ENCODE measurements at regions of chr6 and their contacts with region 1.

Region 1: DNA sequence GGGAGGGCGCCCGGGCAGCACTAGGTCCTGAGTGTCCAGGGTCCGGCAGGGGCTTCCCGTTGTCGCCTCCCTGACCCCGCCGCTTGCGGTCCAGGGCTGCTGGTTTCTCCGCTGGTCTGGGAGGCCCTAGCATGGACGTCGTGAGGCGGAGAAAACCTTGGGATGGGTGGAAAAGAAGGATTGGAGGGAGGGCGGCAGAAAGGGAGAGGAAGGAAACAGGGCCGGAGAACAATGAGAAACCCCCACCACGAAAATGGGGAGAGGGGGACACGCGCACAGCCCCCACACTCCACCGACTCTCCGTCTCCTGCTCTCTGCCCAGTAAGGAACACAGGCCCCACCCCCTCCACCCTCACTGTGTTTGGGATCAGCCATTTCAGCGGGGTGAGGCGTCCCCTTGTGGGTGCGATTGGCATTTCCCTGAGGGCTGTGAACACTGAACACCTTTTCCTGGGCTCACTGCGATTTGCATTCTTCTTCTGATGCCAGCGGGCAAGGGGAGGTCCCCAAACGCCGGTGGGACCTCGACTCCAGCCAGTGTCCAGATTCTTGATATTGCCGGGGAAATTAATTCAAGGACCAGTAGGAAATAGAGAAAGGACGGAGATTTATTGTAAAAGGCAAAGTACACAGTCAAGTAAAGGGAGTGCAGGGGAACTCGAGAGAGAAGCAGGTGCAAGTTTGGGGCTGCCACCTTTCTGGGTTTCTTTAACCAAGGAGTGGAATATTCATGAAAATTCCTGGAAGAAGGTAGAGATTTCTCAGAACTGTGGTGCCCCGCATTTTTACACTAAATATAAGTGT is 3.3 kb upstream of the RAET1G start:
- DNase-seq: peak; percentile 90
- H3K4me3 Mint-ChIP-seq: peak overlapping the region; percentile 12
- H3K27ac Mint-ChIP-seq: no peak overlapping the region
- H3K4me1 Mint-ChIP-seq: peaks cover 19% of the 10 kb centered on the region
- H3K27me3 Mint-ChIP-seq: peaks cover 32% of the 10 kb centered on the region
- CTCF ChIP-seq: peak; percentile 94

Region 2: DNA sequence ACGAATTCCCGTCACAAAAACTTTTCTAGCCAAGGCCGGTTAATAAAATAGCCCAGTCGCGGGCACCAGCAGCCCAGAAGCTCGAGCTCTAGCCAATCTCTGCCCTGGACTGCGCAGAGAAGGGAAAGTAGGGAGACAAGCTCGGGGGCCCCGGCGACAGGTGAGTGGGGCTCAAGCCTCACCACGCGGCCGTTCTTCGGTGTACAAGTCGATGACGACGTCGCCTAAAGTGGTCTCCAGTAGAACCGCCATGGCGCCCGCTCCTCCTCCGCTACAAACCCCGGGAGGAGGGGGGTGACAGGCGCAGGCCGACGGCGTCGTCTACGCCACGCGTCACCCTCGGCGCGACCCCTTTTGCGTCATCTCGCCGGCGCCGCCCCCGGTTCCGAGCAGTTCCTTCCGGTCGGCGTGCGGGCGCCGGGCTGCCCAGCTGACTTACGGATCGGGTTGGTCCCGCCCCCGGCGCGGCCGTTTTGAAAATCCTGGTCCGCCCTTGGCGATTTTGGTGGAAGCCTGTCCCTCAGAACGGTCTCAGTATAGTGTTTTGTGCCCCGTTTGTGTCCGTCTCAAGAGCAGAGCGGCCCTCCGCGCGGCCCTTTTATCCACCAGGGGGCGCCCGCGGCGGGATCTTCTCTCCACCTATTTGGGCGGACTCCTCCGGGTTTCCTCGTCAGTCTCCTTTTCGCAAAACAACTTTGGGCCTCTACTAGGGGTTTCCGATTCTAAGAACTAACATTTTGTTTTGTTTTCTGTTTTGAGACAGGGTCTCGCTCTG is 380.2 kb before region 1 on chr6 and contains the start of gene PPIL4:
- CTCF ChIA-PET with region 1: no interaction called
- POLR2A ChIA-PET with region 1: no interaction called
- intact Hi-C with region 1: loop called (anchors 10 kb)
- DNase-seq: peak; percentile 92
- H3K4me3 Mint-ChIP-seq: peak within 1 kb of the TSS; percentile 92
- H3K27ac Mint-ChIP-seq: peak within 1 kb of the TSS; percentile 90
- H3K4me1 Mint-ChIP-seq: peaks cover 34% of the 10 kb centered on the region
- H3K27me3 Mint-ChIP-seq: no peaks in the 10 kb centered on the region
- CTCF ChIP-seq: peak; percentile 88
- total RNA-seq, gene PPIL4: 37.2 and 47.7 TPM in 2 replicates

Region 3: GRCh38 chr6:149723771-149724417 is 202.3 kb before region 1 on chr6:
- CTCF ChIA-PET with region 1: no interaction called
- POLR2A ChIA-PET with region 1: interaction called, 3 read pairs
- intact Hi-C with region 1: loop called (anchors 1 kb)
- DNase-seq: peak; percentile 87
- H3K4me3 Mint-ChIP-seq: no peak overlapping the region
- H3K27ac Mint-ChIP-seq: no peak overlapping the region
- H3K4me1 Mint-ChIP-seq: peaks cover 6% of the 10 kb centered on the region
- H3K27me3 Mint-ChIP-seq: no peaks in the 10 kb centered on the region
- CTCF ChIP-seq: peak; percentile 82

Region 4: GRCh38 chr6:149766156-149766769 is 159.9 kb before region 1 on chr6:
- CTCF ChIA-PET with region 1: no interaction called
- POLR2A ChIA-PET with region 1: no interaction called
- intact Hi-C with region 1: no loop called
- DNase-seq: peak; percentile 88
- H3K4me3 Mint-ChIP-seq: peak overlapping the region; percentile 4
- H3K27ac Mint-ChIP-seq: peak overlapping the region; percentile 52
- H3K4me1 Mint-ChIP-seq: peaks cover 32% of the 10 kb centered on the region
- H3K27me3 Mint-ChIP-seq: no peaks in the 10 kb centered on the region
- CTCF ChIP-seq: no peak

Region 5: GRCh38 chr6:149834513-149835481 is 91.4 kb before region 1 on chr6:
- CTCF ChIA-PET with region 1: interaction called, 43 read pairs
- POLR2A ChIA-PET with region 1: no interaction called
- intact Hi-C with region 1: loop called (anchors 1 kb)
- DNase-seq: peak; percentile 80
- H3K4me3 Mint-ChIP-seq: no peak overlapping the region
- H3K27ac Mint-ChIP-seq: no peak overlapping the region
- H3K4me1 Mint-ChIP-seq: no peaks in the 10 kb centered on the region
- H3K27me3 Mint-ChIP-seq: no peaks in the 10 kb centered on the region
- CTCF ChIP-seq: peak; percentile 80

Region 6: DNA sequence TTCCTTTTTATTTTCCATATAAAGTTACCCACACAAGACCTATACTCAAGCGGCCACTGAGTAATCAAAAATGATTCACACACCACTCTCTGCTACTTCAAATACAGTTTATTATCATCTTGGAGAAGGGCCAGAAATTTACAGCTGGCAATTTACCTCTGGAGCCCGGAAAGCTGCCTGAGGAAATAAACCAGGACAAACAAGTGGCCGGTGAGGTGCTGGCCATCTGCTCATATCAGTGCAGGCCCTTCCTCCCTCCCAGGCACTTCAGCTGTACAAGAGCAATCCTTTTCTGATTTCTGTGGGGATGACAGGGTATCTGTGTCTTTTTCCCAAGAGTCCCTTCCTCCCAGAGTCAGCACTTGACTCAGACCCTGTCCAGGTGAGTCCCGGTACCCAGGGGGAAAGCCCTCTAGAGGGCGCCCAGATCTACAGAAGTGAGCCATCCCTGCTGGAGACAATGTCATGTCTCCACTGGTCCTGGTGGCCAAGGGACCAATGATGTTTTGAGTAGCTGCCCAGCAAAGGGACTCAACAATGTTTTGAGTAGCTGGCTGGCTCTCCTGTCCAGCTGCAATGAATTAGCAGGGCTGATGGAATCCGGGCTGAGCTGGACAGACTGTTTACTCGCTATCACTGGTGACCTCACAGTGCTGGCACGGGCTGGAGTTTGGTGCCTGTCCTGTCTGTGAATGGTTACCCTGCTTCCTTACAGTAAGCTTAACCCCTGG is 85.7 kb before region 1 on chr6:
- CTCF ChIA-PET with region 1: interaction called, 43 read pairs
- POLR2A ChIA-PET with region 1: interaction called, 4 read pairs
- intact Hi-C with region 1: loop called (anchors 1 kb)
- DNase-seq: peak; percentile 79
- H3K4me3 Mint-ChIP-seq: no peak overlapping the region
- H3K27ac Mint-ChIP-seq: no peak overlapping the region
- H3K4me1 Mint-ChIP-seq: peaks cover 14% of the 10 kb centered on the region
- H3K27me3 Mint-ChIP-seq: no peaks in the 10 kb centered on the region
- CTCF ChIP-seq: peak; percentile 76

Region 7: DNA sequence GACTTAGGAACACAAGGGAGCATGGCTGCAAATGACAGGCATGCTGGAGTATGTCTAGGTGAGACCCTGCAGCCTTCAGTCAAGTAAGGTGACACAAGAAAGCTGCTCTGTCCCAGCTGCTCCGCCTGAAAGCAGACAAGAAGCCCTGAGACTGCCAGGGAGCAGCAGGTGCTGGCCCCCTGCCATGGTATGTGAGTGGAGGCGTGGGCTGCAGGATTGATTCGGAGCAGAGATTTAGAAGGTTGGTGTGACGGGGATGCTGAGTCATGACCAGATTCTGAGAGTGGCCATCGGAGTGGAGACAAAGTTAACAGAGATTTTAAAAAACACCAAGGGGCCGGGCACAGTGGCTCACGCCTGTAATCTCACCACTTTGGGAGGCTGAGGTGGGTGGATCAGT is 79.9 kb before region 1 on chr6:
- CTCF ChIA-PET with region 1: interaction called, 43 read pairs
- POLR2A ChIA-PET with region 1: interaction called, 6 read pairs
- intact Hi-C with region 1: no loop called
- DNase-seq: peak; percentile 94
- H3K4me3 Mint-ChIP-seq: peak overlapping the region; percentile 38
- H3K27ac Mint-ChIP-seq: no peak overlapping the region
- H3K4me1 Mint-ChIP-seq: peaks cover 49% of the 10 kb centered on the region
- H3K27me3 Mint-ChIP-seq: no peaks in the 10 kb centered on the region
- CTCF ChIP-seq: no peak

Region 8: DNA sequence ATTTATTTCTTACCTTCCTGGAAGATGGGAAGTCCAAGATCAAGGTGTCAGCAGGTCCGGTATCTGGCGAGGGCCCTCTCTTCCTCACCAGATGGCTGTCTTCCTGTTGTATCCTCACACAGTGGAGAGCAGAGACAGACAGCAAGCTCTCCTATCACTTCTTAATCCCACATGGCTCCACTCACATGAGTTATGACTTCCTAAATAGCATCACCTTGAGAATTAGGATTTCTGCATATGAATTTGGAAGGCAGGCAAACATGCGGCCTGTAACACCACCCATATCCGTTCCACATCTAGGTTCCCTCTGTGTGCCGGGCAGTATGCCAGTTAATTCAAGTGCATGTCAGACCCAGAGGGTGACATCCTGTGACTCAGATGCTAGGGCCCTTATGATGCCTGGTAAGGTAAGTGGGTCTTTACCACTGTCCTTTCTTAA is 30.3 kb before region 1 on chr6:
- CTCF ChIA-PET with region 1: interaction called, 7 read pairs
- POLR2A ChIA-PET with region 1: interaction called, 14 read pairs
- intact Hi-C with region 1: no loop called
- DNase-seq: peak; percentile 92
- H3K4me3 Mint-ChIP-seq: peak overlapping the region; percentile 41
- H3K27ac Mint-ChIP-seq: peak overlapping the region; percentile 85
- H3K4me1 Mint-ChIP-seq: peaks cover 69% of the 10 kb centered on the region
- H3K27me3 Mint-ChIP-seq: no peaks in the 10 kb centered on the region
- CTCF ChIP-seq: no peak

Region 9: DNA sequence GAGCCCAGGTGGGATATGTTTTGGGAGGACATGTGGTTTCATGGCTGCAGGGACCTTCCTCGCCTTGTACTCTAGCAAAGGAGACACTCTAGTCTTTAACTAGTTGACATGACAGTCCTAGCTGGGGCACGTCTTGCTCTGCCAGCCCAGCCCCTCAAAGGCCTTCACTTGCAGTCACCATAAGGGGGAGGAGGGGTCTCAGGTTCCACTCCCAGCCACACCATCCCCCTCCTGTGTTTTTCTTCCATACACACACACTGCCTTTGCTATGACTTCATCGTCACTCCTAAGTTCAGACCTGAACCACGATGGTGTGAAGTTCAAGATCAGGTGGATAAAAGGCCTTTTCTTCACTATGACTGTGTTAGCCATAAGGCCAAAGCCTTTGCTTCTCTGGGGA is 51.0 kb after region 1 on chr6:
- CTCF ChIA-PET with region 1: no interaction called
- POLR2A ChIA-PET with region 1: no interaction called
- intact Hi-C with region 1: no loop called
- DNase-seq: no peak
- H3K4me3 Mint-ChIP-seq: no peak overlapping the region
- H3K27ac Mint-ChIP-seq: no peak overlapping the region
- H3K4me1 Mint-ChIP-seq: no peaks in the 10 kb centered on the region
- H3K27me3 Mint-ChIP-seq: peaks cover 56% of the 10 kb centered on the region
- CTCF ChIP-seq: no peak